Activated B cell treated with CpG ODN at 0.5 μM for 24 hours (primary cell): ENCODE measurements at regions of chr7 and their contacts with region 1.

Region 1: DNA sequence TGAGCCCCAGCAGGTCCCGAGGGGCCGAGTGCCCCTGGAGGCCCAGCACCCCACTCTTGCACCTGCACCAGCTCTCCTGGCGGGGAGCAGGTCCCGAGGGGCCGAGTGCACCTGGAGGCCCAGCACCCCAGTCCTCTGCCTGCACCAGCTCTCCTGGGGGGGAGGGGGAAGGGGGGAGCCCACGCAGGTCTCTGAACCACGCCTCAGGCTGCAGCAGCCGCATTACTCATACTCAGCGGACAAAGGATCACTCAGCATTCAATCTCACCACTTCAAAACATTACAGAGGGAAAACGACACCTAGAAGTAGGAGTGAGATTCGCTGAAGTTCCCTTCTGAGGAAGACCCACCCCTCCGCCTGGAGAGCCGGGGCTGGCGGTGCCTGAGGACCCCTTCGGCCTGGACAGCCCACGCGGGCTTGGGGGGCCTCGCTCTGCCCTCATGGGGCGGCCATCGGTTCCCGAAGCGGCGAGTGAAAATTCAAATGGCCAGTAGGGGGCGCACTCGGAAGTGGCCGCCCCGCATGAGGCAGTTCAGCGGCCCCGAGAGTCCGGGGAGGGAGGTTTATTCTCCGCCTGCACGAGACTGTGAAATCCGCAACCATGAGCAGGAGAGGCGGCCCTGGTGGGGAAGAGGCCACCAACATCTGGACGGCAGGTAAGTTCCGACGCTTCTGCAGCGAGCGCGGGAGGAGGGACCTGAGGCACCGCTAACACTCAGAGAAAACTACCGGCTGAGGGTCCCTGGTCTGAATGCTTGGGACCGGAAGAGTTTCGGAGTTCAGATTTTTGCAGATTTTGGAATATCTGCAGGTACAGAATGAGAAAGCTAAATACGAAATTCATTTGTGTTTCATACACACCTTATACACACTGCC is 1.1 kb upstream of the GPER1 start:
- DNase-seq: peak; percentile 77
- ATAC-seq: peak; percentile 91
- H3K4me3 Mint-ChIP-seq: peak overlapping the region; percentile 83
- H3K27ac Mint-ChIP-seq: peak overlapping the region; percentile 70
- H3K4me1 Mint-ChIP-seq: peaks cover 33% of the 10 kb centered on the region
- H3K27me3 Mint-ChIP-seq: no peaks in the 10 kb centered on the region
- CTCF ChIP-seq: peak; percentile 95

Region 2: DNA sequence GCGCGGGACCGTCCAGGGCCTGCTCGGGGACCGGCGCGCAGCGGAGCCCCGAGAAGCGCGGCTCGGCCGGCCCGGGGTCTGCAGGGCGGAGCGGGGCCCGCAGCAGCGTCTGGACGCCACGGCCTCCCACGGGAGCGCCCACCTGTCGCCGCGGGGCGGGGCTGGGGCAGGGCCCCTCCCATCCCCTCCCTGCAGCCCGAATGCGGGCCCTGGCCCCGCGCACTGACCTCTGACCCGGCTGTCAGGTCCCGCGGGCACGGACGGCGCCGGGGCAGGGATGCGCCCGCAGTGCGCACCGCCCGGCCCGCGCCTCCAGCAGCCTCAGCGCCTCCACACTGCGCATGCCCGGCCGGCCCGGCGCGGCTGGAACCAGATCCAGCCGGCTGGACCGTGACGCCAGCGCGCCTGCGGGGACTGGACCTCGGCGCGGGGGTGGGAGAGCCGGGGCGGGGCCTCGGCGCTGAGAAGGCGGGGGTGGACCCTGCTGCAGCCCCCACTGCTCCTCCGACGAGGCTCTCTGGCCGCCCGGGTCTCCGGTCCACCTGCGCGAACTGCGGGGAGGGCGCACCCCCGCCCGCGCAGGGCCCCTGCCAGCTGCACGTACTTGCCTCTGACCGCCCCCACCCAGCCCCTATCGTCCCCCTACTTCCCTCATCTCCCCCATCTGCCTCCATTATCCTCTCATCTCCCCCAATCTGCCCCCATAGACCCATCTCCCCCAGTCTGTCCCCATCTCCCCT is 58.6 kb before region 1 on chr7:
- CTCF ChIA-PET with region 1: interaction called, 5 read pairs
- POLR2A ChIA-PET with region 1: interaction called, 18 read pairs
- intact Hi-C with region 1: loop called (anchors 1 kb)
- DNase-seq: peak; percentile 85
- ATAC-seq: peak; percentile 38
- H3K4me3 Mint-ChIP-seq: peak overlapping the region; percentile 91
- H3K27ac Mint-ChIP-seq: no peak overlapping the region
- H3K4me1 Mint-ChIP-seq: peaks cover 61% of the 10 kb centered on the region
- H3K27me3 Mint-ChIP-seq: no peaks in the 10 kb centered on the region
- CTCF ChIP-seq: no peak

Region 3: GRCh38 chr7:1103009-1103788 is 16.4 kb after region 1 on chr7:
- CTCF ChIA-PET with region 1: interaction called, 8 read pairs
- POLR2A ChIA-PET with region 1: interaction called, 8 read pairs
- intact Hi-C with region 1: loop called (anchors 1 kb)
- DNase-seq: no peak
- ATAC-seq: peak; percentile 46
- H3K4me3 Mint-ChIP-seq: peak overlapping the region; percentile 70
- H3K27ac Mint-ChIP-seq: peak overlapping the region; percentile 76
- H3K4me1 Mint-ChIP-seq: peaks cover 30% of the 10 kb centered on the region
- H3K27me3 Mint-ChIP-seq: peaks cover 13% of the 10 kb centered on the region
- CTCF ChIP-seq: no peak

Region 4: DNA sequence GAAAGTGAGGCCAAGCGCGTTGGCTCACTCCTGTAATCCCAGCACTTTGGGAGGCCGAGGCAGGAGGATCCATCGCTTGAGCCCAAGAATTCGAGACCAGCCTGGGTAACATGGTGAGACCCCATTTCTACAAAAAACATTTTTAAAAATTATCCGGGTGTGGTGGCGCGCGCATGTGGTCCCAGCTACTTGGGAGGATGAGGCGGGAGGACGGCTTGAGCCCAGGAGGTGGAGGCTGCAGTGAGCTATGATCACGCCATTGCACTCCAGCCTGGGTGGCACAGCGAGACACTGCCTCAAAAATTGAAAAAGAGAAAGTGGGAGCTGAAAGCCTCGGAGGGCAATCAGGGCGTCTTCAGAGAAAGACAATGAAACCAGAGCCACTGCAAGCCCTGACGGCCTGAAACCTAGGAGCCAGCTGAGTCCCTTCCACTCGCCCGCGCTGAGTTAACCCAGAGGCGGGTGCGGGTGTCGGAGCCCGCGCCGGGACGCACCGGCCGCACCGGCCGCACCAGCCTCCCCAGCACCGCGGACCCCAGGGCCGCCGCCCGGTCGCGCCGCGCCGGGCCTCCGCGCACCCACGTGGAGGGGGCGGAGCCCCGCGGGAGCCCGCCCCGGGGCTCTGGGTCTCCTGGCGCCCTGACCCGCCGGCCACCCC is 50.8 kb after region 1 on chr7:
- CTCF ChIA-PET with region 1: interaction called, 4 read pairs
- POLR2A ChIA-PET with region 1: interaction called, 3 read pairs
- intact Hi-C with region 1: loop called (anchors 1 kb)
- DNase-seq: no peak
- ATAC-seq: peak; percentile 62
- H3K4me3 Mint-ChIP-seq: peak overlapping the region; percentile 86
- H3K27ac Mint-ChIP-seq: peak overlapping the region; percentile 70
- H3K4me1 Mint-ChIP-seq: peaks cover 52% of the 10 kb centered on the region
- H3K27me3 Mint-ChIP-seq: no peaks in the 10 kb centered on the region
- CTCF ChIP-seq: no peak

Region 5: DNA sequence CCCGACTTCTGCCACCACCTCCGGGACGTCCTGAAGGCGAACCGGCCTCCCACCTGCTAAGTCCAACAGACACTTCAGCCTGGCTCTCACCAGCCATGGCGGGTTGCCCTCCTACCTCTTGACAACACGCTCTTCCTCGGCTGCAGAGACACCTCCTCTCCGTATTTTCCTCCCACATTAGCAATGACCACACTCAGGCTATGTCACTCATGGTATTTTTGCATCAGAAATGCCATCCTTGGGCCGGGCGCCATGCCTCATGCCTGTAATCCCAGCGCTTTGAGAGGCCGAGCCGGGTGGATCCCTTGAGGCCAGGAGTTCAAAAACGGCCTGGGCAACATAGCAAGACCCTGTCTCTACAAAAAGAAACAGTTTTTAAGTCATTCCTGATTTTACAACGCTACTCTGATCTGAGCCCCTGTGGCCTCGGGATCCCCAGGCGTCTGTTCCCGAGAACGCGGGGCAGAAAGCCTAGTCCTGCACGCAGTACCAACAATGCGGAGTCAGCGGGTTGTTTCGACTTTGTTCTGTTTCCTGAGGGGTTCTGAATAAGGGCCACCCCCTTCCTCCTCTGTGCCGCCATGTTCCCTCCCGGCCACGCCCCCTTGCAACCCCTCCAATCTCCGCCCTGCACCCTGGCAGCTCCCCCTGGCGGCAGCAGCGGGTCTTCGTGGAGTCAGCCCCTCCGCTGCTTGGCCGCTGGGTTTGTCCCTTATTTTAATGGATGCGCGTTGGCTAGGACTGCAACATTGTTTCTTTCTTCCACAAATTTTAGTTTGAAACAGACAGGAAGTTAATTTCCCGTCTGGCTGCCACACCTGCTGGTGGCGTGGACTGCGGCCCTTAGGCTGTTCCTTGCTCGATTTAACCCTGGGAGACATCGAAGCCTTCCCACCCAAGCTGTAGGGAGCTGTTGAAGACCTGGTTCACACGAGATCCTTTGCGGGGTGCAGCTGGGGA is 82.9 kb after region 1 on chr7:
- CTCF ChIA-PET with region 1: interaction called, 3 read pairs
- POLR2A ChIA-PET with region 1: no interaction called
- intact Hi-C with region 1: loop called (anchors 1 kb)
- DNase-seq: peak; percentile 74
- ATAC-seq: peak; percentile 97
- H3K4me3 Mint-ChIP-seq: peak overlapping the region; percentile 76
- H3K27ac Mint-ChIP-seq: no peak overlapping the region
- H3K4me1 Mint-ChIP-seq: peaks cover 14% of the 10 kb centered on the region
- H3K27me3 Mint-ChIP-seq: no peaks in the 10 kb centered on the region
- CTCF ChIP-seq: no peak

Region 6: DNA sequence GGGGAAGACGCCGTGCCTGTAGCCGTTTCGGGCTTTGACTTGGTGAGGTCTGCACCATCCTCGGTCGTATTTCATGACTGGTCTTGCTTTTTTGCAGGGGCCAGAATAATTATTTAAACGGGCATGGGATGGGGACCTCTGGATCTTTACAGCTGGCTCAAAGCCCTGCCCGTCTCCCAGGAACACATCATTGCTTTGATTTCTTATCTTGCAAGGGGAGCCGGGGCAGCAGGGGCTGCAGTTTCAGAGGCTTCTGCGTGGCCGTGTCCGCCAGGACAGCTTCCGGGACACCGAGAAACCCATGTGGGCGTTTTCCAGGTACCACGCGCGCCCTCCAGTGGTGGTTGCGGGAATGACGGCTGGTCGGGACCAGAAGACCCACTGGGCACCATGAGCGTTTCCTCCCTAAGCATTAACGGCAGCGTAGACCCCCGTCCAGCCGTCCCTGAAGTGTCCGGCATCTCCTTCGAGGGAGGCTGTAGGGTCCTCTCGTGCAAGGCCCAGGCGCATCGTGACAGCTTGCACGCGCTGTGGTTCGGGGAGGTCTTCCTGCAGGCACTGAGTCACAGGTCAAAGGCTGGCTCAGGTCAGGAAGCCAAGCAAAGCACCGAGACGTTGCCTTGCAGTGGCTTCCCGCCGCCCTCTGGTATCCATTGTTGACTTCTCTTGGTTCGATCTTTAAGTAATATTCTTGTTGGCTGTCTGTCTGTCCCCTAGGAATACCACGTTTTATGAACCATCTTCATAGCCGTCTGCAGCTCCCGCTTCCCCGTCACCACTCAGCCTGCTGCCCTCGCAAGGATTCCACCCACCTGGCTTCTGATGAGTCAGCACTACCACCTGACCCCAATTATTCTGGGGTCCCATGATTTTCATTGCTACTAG is 89.4 kb after region 1 on chr7:
- CTCF ChIA-PET with region 1: interaction called, 8 read pairs
- POLR2A ChIA-PET with region 1: interaction called, 9 read pairs
- intact Hi-C with region 1: loop called (anchors 1 kb)
- DNase-seq: peak; percentile 85
- ATAC-seq: peak; percentile 80
- H3K4me3 Mint-ChIP-seq: peak overlapping the region; percentile 11
- H3K27ac Mint-ChIP-seq: no peak overlapping the region
- H3K4me1 Mint-ChIP-seq: peaks cover 11% of the 10 kb centered on the region
- H3K27me3 Mint-ChIP-seq: peaks cover 15% of the 10 kb centered on the region
- CTCF ChIP-seq: peak; percentile 78

Region 7: DNA sequence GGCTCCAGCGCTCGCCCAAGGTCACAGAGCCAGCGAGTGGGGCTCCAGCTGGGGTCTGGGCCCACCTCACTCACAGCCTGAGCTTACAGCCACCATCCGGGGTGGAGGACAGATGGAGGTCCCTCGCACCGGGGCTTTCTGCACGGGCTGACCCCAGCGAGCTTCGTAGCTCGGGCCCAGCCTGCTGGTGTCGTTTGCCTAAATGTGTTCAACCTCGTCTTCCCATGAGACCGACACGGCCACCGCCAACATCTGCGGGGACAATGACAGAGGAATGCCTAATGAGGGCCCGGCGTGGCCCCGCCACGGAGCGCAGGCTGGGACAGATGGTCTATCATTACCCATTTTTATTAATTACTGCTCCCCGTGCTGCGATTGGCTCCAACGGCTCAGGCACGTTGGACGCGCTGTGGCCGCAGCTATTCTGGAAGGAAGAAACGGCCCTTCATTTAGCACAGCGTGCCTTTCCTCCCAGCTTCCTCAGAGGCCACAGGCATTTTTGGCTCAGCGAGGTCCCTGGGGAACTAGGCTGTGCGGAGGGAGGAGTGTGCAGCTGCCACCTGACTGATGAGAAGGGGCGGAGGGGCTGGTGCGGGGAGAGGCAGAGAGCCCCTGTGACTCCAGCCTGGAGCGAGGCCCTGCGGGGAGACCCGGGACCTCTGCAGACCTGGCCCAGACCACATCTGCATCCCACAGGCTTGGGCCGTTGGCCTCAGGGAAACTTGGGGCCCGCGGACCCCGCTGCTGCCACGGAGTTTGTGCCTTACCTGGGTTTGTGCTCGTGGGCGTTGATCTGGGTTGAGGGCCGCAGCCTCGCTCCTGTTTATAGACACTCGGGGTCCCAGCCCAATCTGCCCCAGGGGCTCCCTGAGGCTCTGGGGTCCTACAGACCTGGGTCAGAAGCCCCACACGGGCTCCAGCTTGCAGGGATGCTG is 560.4 kb after region 1 on chr7:
- CTCF ChIA-PET with region 1: no interaction called
- POLR2A ChIA-PET with region 1: no interaction called
- intact Hi-C with region 1: no loop called
- DNase-seq: no peak
- ATAC-seq: no peak
- H3K4me3 Mint-ChIP-seq: no peak overlapping the region
- H3K27ac Mint-ChIP-seq: no peak overlapping the region
- H3K4me1 Mint-ChIP-seq: no peaks in the 10 kb centered on the region
- H3K27me3 Mint-ChIP-seq: peaks cover 32% of the 10 kb centered on the region
- CTCF ChIP-seq: no peak